Right ventricle myocardium inferior (tissue), 1 donor: ENCODE measurements at regions of chrX and their contacts with region 1.

Region 1: GRCh38 chrX:118807151-118808017 is 16.2 kb upstream of the ZCCHC12 start:
- DNase-seq: no peak
- ATAC-seq: peak; percentile 50

Region 2: GRCh38 chrX:118644378-118644777 is 163.0 kb before region 1 on chrX:
- intact Hi-C with region 1: loop called (anchors 1 kb)
- DNase-seq: no peak
- ATAC-seq: no peak

Region 3: DNA sequence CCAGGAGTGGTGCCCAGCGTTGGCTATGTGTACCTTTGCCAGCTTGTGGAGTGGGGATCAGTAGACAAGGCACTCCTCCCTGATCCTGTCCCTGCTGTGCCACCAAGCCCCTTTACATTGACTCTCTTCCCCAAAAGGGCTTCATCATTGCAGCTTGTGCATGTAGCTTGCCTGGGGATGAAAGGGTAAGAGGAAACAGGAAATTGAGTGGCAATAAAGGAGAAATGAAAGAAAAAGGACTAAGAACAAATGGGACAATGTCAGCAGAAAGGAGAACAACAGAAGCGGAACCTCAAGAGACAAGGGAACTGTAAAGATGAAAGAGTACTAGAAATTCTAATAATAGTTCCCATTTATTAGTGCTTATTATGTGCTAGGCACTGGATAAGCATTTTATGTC is 88.6 kb before region 1 on chrX:
- intact Hi-C with region 1: no loop called
- DNase-seq: no peak
- ATAC-seq: peak; percentile 23

Region 4: DNA sequence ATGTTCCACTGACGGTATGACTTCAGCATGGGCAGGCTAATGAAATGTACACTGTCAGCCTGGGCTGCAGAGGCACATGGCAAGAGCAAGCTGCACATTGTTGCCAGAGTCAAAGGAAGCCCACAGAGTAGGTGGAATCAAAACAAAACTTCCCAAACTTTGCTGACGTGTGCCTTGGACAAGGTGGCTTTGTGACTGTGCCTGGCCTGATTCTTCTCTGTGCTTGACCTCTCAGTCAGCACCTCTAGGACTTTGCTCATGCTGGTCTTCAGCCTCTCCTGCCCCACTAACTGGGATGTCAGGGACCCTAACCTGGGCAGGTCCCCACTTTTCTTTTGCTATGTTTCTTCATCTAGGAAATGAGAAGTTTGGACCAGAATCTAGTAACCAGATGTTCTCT is 360.7 kb after region 1 on chrX:
- intact Hi-C with region 1: no loop called
- DNase-seq: no peak
- ATAC-seq: no peak